ENCODE measurements at regions of chr22 and their contacts with region 1.

Region 1: DNA sequence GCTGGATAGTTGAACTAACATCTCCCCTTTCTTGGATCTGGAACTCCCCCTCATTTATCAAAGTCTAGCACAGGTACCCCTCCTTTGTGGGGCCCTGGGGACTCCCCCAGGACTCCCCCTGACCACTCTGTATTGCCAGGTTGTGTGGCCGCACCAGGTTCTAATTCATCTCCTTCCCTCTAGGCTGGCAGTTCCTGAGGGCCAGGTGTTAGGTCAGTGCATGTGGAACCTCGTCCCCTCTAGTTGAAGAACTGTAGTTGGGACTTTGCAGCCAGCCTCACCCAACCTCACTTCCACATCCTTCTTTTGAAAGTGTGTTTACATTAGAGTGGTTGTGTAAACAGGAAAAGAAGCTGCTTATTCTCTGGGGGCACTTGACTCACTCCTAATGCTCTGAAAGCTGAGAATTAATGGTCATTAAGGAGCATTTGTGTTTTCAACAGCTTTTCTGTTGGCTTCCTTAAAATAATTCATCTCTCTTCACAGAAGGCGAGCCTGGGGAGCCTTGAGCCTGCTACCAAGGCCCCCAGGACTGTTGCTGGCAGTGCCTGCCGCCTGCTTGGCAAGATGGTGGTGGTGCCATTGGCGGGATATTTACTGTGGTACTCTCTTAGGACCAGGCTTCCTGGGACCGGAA is 11.8 kb downstream of the UPB1 start:
- DNase-seq: no peak
- H3K4me3 ChIP-seq: no peak overlapping the region
- H3K27ac ChIP-seq: no peak overlapping the region
- H3K4me1 ChIP-seq: no peaks in the 10 kb centered on the region
- H3K27me3 ChIP-seq: no peaks in the 10 kb centered on the region
- CTCF ChIP-seq: no peak
- POLR2A ChIP-seq: no peak

Region 2: GRCh38 chr22:24473284-24473683 is 33.6 kb before region 1 on chr22:
- intact Hi-C with region 1: loop called (anchors 2 kb)
- DNase-seq: no peak
- H3K4me3 ChIP-seq: no peak overlapping the region
- H3K27ac ChIP-seq: no peak overlapping the region
- H3K4me1 ChIP-seq: no peaks in the 10 kb centered on the region
- H3K27me3 ChIP-seq: no peaks in the 10 kb centered on the region
- CTCF ChIP-seq: no peak
- POLR2A ChIP-seq: no peak

Region 3: DNA sequence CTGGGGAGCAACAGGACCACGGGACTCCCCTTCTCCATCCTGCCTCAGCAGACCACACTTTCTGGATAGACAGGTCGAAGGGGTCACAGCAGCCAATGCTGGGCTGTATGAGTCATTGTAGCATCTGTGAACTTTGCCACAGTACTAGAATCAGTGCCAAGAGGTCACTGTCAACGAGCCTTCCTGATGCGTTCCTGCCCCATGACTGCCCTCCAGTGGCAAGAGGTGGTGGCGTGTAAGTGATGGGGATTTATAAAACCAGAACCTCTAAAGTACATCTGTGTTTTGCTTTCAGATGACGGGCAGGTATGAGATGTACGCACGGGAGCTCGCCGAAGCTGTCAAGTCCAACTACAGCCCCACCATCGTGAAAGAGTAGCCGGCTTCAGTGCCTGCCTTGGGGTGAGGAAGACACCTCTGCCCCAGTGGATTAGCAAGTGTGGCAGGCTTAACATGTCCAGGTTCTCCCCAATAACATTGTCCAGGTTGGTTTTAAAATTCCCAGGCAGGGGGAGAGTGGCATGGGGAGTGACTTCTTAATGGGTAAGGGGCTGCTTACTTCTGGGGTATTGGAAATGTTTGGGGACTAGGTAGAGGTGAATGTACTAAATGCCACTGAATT is 18.6 kb after region 1 on chr22:
- intact Hi-C with region 1: no loop called
- DNase-seq: peak; percentile 64 to 70
- H3K4me3 ChIP-seq: no peak overlapping the region
- H3K27ac ChIP-seq: peak overlapping the region; percentile 2 to 42
- H3K4me1 ChIP-seq: no peaks in the 10 kb centered on the region
- H3K27me3 ChIP-seq: no peaks in the 10 kb centered on the region
- CTCF ChIP-seq: peak; percentile 35 to 81 (median 78)
- POLR2A ChIP-seq: no peak